Mucosa of descending colon (tissue), 3 donors: ENCODE measurements at regions of chr20 and their contacts with region 1.

Region 1: GRCh38 chr20:41173161-41173721 is 35.9 kb downstream of the PLCG1 start:
- DNase-seq: peak; percentile 78 to 88 (median 88)
- ATAC-seq: peak; percentile 92
- H3K4me3 ChIP-seq: no peak overlapping the region
- H3K4me1 ChIP-seq: peaks cover 4% of the 10 kb centered on the region
- CTCF ChIP-seq: peak; percentile 88

Region 2: GRCh38 chr20:41072190-41072863 is 100.9 kb before region 1 on chr20:
- intact Hi-C with region 1: no loop called
- DNase-seq: no peak
- ATAC-seq: peak; percentile 27
- H3K4me3 ChIP-seq: no peak overlapping the region
- H3K4me1 ChIP-seq: peaks cover 29% of the 10 kb centered on the region
- CTCF ChIP-seq: no peak

Region 3: DNA sequence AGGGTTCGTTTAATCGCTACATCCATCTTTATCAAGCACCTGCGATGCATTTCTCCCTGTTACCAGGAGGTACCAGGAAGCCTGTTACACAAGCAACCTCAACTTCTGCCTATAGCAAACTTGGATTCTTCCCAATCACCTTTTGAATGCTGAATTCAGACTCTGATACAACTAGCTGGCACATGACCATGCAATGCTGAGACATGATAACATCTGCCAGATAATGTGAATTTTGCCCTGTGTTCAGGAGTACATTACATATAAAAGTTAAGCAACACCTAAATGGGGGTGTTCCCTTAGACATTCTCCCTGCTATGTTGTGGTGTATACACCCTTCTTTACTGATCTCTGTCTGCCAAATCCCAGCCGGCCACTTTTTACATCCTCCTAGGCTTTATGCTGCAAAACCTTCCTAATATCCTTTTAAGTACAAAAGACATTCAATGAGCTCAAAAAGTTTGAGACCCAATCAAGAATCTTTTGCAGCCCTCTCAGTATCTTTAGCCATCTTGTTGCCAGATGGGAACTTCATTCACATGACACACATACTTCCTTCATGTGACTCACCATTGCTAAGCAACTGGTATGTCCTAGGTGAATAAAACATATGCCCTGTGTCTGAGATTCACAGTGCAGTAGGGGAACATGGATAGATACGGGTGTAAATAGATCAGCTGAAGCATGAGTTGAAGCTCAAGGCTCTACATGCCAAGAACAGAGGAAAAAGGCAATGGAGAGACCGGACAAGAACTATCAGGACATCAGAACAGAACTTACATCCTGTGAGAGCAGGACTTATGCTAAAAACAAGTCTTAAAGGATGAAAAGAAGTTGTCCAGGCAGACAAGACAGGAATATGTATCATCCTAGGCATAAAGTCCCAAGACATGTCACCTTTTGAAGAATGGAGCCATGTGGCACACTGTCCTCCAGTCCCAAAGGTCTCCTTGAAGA is 60.0 kb after region 1 on chr20:
- intact Hi-C with region 1: loop called in 1 of 2 experiments (anchors 5 kb)
- DNase-seq: no peak
- ATAC-seq: peak; percentile 69
- H3K4me3 ChIP-seq: no peak overlapping the region
- H3K4me1 ChIP-seq: peaks cover 8% of the 10 kb centered on the region
- CTCF ChIP-seq: no peak